CD4-positive, alpha-beta T cell (primary cell): ENCODE measurements at regions of chr1 and their contacts with region 1.

Region 1: GRCh38 chr1:37692078-37692833 is at the start of gene CDCA8:
- DNase-seq: peak; percentile 97 to 99 (median 98)
- ATAC-seq: peak; percentile 87
- H3K4me3 ChIP-seq: peak within 1 kb of the TSS; percentile 73
- H3K4me3 Mint-ChIP-seq: peak within 1 kb of the TSS; percentile 98
- H3K27ac ChIP-seq: peak within 1 kb of the TSS in 1 of 2 donors; percentile 46
- H3K27ac Mint-ChIP-seq: peak within 1 kb of the TSS; percentile 90
- H3K4me1 ChIP-seq: peaks cover 41% of the 10 kb centered on the region
- H3K4me1 Mint-ChIP-seq: peaks cover 37% of the 10 kb centered on the region
- H3K27me3 ChIP-seq: no peaks in the 10 kb centered on the region
- H3K27me3 Mint-ChIP-seq: no peaks in the 10 kb centered on the region
- CTCF ChIP-seq: peak; percentile 63
- total RNA-seq, gene CDCA8: 0.25 to 0.36 TPM

Region 2: DNA sequence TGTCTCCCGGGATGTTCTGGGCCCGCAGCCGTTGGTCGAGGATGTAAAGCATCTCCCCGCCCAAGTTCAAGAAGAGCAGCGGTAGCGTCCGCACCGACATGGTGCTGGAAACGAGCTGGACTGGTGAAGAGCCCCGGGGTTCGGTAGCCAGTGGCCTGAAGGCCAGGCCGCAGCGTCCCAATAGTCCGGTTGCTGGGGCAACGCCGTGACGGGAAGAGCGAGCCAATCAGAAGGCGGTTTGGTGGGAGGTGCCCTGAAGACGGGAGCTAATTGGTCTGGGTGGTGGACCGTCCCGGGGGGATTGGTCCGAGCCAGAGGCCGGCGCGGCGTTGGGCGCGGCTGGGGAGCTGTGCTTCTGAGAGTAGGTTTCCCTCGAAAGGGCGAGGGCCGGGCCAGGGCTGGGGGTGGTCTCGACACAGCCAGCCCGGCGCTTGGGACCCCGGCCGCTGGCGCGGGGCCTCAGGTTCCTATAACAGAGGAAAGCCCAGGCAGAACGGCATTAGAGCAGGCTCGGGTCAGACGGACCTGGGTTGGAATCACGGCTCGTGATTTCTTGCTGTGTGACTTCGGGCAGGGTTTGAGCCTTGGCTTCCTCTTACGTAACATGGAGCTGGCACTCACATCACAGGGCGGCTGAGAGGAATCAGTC is 1241.9 kb before region 1 on chr1 and contains the start of gene OSCP1:
- CTCF ChIA-PET with region 1: no interaction called
- POLR2A ChIA-PET with region 1: no interaction called
- intact Hi-C with region 1: loop called in 1 of 2 experiments (anchors 5 kb)
- DNase-seq: peak; percentile 63 to 94 (median 80)
- ATAC-seq: peak; percentile 92
- H3K4me3 ChIP-seq: peak within 1 kb of the TSS; percentile 83
- H3K4me3 Mint-ChIP-seq: peak within 1 kb of the TSS; percentile 95
- H3K27ac ChIP-seq: peak within 1 kb of the TSS; percentile 82 to 89
- H3K27ac Mint-ChIP-seq: peak within 1 kb of the TSS; percentile 91
- H3K4me1 ChIP-seq: peaks cover 15% of the 10 kb centered on the region
- H3K4me1 Mint-ChIP-seq: peaks cover 23% of the 10 kb centered on the region
- H3K27me3 ChIP-seq: no peaks in the 10 kb centered on the region
- H3K27me3 Mint-ChIP-seq: no peaks in the 10 kb centered on the region
- CTCF ChIP-seq: no peak
- total RNA-seq, gene OSCP1: 0.82 to 2.4 TPM

Region 3: DNA sequence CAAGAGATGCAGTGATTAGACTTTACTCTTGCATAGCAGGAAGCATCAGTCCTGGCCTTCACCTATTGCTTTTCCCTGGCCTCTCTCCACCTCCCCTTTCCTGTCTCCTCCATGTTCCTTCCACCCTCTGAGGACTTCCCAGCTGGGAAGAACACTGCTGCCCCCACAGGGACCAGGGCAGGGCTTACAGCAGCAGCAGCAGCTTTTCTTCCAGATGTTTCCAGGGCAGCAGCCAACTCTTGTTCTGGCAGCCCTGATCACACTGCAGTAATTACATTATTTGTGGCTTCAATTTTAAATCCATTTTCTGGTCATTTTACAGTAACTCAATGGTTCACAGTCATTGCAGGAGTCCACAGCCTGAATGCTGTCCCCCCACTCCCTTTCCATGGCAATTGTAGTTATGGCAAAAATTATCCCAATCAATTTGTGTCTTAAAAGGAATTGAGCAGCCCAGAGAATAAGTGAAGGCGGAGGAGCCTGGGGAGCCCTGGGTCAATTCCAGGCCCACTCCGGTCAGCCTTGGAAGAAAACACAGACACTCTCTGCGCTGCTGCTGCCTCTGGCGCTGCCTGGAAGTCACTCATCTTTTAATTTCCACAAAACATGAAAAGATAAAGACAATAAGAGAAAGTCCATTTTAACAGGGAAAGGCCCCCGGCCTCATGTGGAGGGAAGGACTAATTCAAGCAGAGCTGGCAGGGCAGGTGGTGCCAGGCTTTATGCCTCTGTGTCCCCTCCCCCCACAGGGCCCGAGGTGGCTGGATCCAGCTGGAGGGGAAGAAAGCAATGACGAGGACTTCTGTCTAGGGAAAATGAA is 806.5 kb before region 1 on chr1:
- CTCF ChIA-PET with region 1: no interaction called
- POLR2A ChIA-PET with region 1: no interaction called
- intact Hi-C with region 1: no loop called
- DNase-seq: peak in 1 of 14 experiments; percentile 17
- ATAC-seq: no peak
- H3K4me3 ChIP-seq: no peak overlapping the region
- H3K4me3 Mint-ChIP-seq: no peak overlapping the region
- H3K27ac ChIP-seq: no peak overlapping the region
- H3K27ac Mint-ChIP-seq: no peak overlapping the region
- H3K4me1 ChIP-seq: no peaks in the 10 kb centered on the region
- H3K4me1 Mint-ChIP-seq: no peaks in the 10 kb centered on the region
- H3K27me3 ChIP-seq: peaks cover 5 to 8% of the 10 kb centered on the region in 2 experiments
- H3K27me3 Mint-ChIP-seq: peaks cover 44% of the 10 kb centered on the region
- CTCF ChIP-seq: no peak

Region 4: GRCh38 chr1:37514350-37515184 is 177.7 kb before region 1 on chr1 and contains the start of gene MEAF6:
- CTCF ChIA-PET with region 1: interaction called, 8 read pairs
- POLR2A ChIA-PET with region 1: interaction called, 11 read pairs
- intact Hi-C with region 1: no loop called
- DNase-seq: peak; percentile 72 to 93 (median 80)
- ATAC-seq: peak; percentile 95
- H3K4me3 ChIP-seq: peak within 1 kb of the TSS; percentile 86
- H3K4me3 Mint-ChIP-seq: peak within 1 kb of the TSS; percentile 97
- H3K27ac ChIP-seq: peak within 1 kb of the TSS; percentile 79 to 95
- H3K27ac Mint-ChIP-seq: peak within 1 kb of the TSS; percentile 95
- H3K4me1 ChIP-seq: peaks cover 22% of the 10 kb centered on the region
- H3K4me1 Mint-ChIP-seq: peaks cover 46% of the 10 kb centered on the region
- H3K27me3 ChIP-seq: no peaks in the 10 kb centered on the region
- H3K27me3 Mint-ChIP-seq: no peaks in the 10 kb centered on the region
- CTCF ChIP-seq: peak; percentile 75
- total RNA-seq, gene MEAF6: 39.0 to 41.5 TPM

Region 5: DNA sequence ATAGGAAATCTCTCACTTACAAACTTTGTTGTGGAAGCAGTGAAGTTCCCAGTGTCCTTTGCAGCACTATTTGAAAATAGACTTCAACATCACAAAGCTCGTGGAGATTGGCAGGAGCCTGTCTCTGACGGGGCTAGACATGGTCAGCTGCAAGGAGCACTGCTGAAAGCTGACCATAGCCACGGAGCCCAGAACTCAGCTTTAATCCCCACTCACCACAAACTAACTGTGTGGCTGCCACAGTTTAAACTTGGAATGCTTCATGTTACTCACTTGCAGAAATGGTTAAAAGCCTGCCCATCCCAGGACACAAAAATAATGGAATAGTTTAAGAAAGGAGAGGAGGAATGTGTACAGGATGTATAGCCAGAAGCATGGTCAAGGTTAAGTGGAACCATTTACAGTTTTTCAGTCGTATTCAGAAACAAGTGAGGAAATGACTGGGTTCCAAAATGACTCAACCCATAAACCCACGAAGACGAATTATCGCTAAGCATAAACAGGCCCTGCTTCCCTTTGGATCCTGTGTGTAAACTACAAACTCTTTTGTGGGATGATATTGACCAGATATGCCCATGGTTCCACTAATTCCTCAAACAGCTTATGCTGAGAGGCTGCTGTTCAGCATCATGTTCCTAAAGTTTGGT is 117.3 kb before region 1 on chr1:
- CTCF ChIA-PET with region 1: no interaction called
- POLR2A ChIA-PET with region 1: no interaction called
- intact Hi-C with region 1: no loop called
- DNase-seq: no peak
- ATAC-seq: no peak
- H3K4me3 ChIP-seq: no peak overlapping the region
- H3K4me3 Mint-ChIP-seq: no peak overlapping the region
- H3K27ac ChIP-seq: no peak overlapping the region
- H3K27ac Mint-ChIP-seq: no peak overlapping the region
- H3K4me1 ChIP-seq: no peaks in the 10 kb centered on the region
- H3K4me1 Mint-ChIP-seq: no peaks in the 10 kb centered on the region
- H3K27me3 ChIP-seq: no peaks in the 10 kb centered on the region
- H3K27me3 Mint-ChIP-seq: no peaks in the 10 kb centered on the region
- CTCF ChIP-seq: no peak

Region 6: DNA sequence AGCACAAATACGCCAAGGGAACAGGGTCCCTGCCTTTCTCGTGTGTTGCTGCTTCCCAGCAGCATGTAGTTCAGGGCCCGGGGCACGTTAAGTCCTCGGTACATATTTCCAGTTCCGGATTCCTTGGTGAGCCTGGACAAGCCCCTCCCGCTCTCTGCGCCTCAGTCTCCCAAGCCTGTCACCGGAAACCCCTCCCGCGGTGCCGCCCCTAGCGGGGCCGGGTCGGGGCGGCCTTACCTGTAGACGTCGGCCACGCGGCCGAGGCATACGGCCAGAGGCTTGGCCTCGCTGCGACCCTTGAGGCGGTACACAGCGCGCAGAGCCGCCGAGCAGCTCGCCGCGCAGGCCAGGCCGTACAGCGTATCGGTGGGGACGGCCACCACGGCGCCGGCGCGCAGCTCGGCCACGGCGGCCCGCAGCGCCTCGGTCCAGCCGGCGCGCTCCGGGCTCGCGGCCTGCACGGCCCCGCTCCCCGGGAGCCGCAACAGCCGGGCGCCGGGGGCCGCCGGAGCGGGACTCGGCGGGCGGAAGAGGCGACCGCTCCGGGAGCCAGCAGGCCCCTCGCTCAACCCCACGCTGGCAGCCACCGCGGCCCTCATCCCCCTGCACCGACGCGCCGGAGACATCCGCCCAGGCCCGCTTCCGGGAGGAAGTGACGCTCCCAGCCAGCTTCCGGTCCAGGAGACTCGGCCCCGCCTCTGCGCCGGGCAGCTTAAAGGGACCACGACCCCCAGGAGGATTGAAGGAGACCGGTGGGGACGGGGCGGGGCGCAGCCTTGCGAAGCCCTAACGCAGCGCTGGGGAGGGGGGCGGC is 115.5 kb after region 1 on chr1 and contains the starts of genes C1orf122 and YRDC:
- CTCF ChIA-PET with region 1: interaction called, 4 read pairs
- POLR2A ChIA-PET with region 1: interaction called, 9 read pairs
- intact Hi-C with region 1: loop called (anchors 2 to 5 kb)
- DNase-seq: peak; percentile 85 to 95 (median 90)
- ATAC-seq: peak; percentile 89
- H3K4me3 ChIP-seq: peak within 1 kb of the TSS; percentile 82
- H3K4me3 Mint-ChIP-seq: peak within 1 kb of the TSS; percentile 97
- H3K27ac ChIP-seq: peak within 1 kb of the TSS; percentile 85
- H3K27ac Mint-ChIP-seq: peak within 1 kb of the TSS; percentile 97
- H3K4me1 ChIP-seq: peaks cover 35% of the 10 kb centered on the region
- H3K4me1 Mint-ChIP-seq: peaks cover 44% of the 10 kb centered on the region
- H3K27me3 ChIP-seq: no peaks in the 10 kb centered on the region
- H3K27me3 Mint-ChIP-seq: no peaks in the 10 kb centered on the region
- CTCF ChIP-seq: no peak
- total RNA-seq, gene C1orf122: 10.9 to 13.2 TPM
- total RNA-seq, gene YRDC: 31.1 to 31.2 TPM

Region 7: GRCh38 chr1:37994886-37995566 is 302.8 kb after region 1 on chr1:
- CTCF ChIA-PET with region 1: interaction called, 3 read pairs
- POLR2A ChIA-PET with region 1: no interaction called
- intact Hi-C with region 1: loop called in 1 of 2 experiments (anchors 5 kb)
- DNase-seq: peak in 1 of 14 experiments; percentile 21
- ATAC-seq: no peak
- H3K4me3 ChIP-seq: no peak overlapping the region
- H3K4me3 Mint-ChIP-seq: peak overlapping the region; percentile 78
- H3K27ac ChIP-seq: peak overlapping the region; percentile 5 to 17
- H3K27ac Mint-ChIP-seq: peak overlapping the region; percentile 73
- H3K4me1 ChIP-seq: peaks cover 36% of the 10 kb centered on the region
- H3K4me1 Mint-ChIP-seq: peaks cover 23% of the 10 kb centered on the region
- H3K27me3 ChIP-seq: no peaks in the 10 kb centered on the region
- H3K27me3 Mint-ChIP-seq: no peaks in the 10 kb centered on the region
- CTCF ChIP-seq: no peak

Region 8: DNA sequence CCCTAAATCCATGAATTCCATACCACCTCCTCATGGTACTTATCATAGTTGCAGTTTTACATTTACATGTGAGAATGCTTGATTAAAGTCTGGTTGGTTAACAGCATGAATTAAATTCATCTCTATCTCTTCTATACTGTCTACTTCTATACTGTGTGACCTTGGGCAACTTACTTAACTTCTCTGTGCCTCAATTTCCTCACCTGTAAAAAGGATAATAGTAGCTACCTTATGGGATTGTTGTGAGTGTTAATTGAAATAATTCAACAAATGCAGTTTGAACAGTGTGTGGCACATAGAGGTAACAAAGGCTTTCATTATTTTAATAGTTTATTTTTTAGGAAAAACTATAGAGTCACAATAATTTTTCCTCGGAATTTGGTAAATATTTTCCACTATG is 936.0 kb after region 1 on chr1:
- CTCF ChIA-PET with region 1: no interaction called
- POLR2A ChIA-PET with region 1: no interaction called
- intact Hi-C with region 1: no loop called
- DNase-seq: no peak
- ATAC-seq: no peak
- H3K4me3 ChIP-seq: no peak overlapping the region
- H3K4me3 Mint-ChIP-seq: no peak overlapping the region
- H3K27ac ChIP-seq: no peak overlapping the region
- H3K27ac Mint-ChIP-seq: no peak overlapping the region
- H3K4me1 ChIP-seq: no peaks in the 10 kb centered on the region
- H3K4me1 Mint-ChIP-seq: no peaks in the 10 kb centered on the region
- H3K27me3 ChIP-seq: no peaks in the 10 kb centered on the region
- H3K27me3 Mint-ChIP-seq: peaks cover 25% of the 10 kb centered on the region
- CTCF ChIP-seq: no peak

Region 9: DNA sequence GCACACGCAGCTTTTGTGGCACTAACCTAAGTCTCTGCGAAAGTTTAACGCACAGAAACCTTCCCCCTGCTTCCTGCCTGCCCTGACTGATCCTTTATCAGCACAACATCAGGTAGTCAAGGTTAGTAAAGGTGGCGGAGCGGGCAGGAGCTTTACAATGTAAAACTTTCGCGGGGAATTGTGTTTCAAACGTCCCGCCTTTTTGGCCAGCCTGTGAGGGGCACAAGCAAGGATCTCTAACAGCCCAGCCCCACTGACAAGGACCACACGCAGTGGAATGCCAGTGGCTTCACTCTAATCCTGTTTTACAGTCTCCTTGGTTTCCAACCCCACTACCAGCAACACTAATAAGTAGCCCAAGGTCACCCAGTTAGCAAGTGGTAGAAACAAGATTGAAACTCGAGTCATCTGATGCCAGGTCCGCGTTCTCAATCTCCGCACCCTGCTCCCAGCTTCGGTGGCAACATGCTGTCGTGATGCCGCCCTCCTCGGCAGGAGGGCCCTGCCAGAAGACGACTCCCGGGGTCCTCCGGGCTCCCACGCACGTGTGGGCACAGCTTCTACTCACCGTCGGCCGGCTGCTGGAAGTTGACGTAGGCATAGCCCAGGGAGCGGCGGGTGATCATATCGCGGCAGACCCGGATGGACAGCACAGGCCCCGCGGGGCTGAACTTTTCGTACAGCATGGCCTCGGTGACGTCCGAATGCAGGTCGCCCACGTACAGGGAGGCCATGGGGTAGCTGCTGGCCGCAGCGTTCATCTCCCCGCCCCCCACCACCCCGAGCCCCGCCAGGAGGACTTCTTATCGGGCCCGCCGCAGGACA is 1883.1 kb after region 1 on chr1:
- CTCF ChIA-PET with region 1: no interaction called
- POLR2A ChIA-PET with region 1: no interaction called
- intact Hi-C with region 1: loop called in 1 of 2 experiments (anchors 5 kb)
- DNase-seq: peak in 13 of 14 experiments; percentile 12 to 72 (median 43)
- ATAC-seq: peak; percentile 61
- H3K4me3 ChIP-seq: peak overlapping the region; percentile 86
- H3K4me3 Mint-ChIP-seq: peak overlapping the region; percentile 94
- H3K27ac ChIP-seq: peak overlapping the region; percentile 57 to 60
- H3K27ac Mint-ChIP-seq: peak overlapping the region; percentile 87
- H3K4me1 ChIP-seq: peaks cover 37% of the 10 kb centered on the region
- H3K4me1 Mint-ChIP-seq: peaks cover 45% of the 10 kb centered on the region
- H3K27me3 ChIP-seq: no peaks in the 10 kb centered on the region
- H3K27me3 Mint-ChIP-seq: no peaks in the 10 kb centered on the region
- CTCF ChIP-seq: no peak